Breast epithelium (tissue), 4 donors: ENCODE measurements at regions of chr4 and their contacts with region 1.

Region 1: GRCh38 chr4:24584175-24584850 is at the start of gene DHX15:
- DNase-seq: peak; percentile 94
- H3K4me3 ChIP-seq: peak within 1 kb of the TSS; percentile 82 to 99 (median 88)
- H3K27ac ChIP-seq: peak within 1 kb of the TSS; percentile 98 to 99
- H3K4me1 ChIP-seq: peaks cover 0 to 10% of the 10 kb centered on the region in 2 donors
- H3K27me3 ChIP-seq: no peaks in the 10 kb centered on the region
- CTCF ChIP-seq: peak in 2 of 3 donors; percentile 17 to 31
- POLR2A ChIP-seq: peak; percentile 64
- total RNA-seq, gene DHX15: 119 to 207 (median 192) TPM

Region 2: DNA sequence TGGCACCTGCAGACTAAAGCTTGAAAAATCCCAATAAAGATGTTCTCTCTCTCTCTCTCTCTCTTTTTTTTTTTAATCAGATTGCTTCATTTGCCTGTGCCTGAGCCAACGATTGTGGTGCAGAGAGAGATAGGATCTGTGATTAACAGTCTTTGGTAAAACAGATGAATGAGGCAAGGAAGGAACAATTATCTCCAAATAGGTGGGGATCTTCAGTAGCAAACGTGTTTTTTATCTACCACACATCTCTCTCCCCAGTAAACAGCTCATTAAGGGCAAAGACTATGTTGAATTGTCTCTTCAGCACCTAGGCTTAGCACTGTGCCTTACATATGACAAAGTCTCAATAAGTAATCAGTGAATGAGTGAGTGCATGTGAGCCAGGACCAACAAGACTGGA is 1426.0 kb after region 1 on chr4:
- intact Hi-C with region 1: loop called (anchors 5 kb)
- DNase-seq: no peak
- H3K4me3 ChIP-seq: no peak overlapping the region
- H3K27ac ChIP-seq: no peak overlapping the region
- H3K4me1 ChIP-seq: peaks cover 0 to 3% of the 10 kb centered on the region in 2 donors
- H3K27me3 ChIP-seq: no peaks in the 10 kb centered on the region
- CTCF ChIP-seq: no peak
- POLR2A ChIP-seq: no peak